Activated CD8-positive, alpha-beta T cell treated with anti-CD3 and anti-CD28 coated beads, Interleukin-2, amount 10 ng/mL, durations not matched to agents 7 days and 5 days (primary cell): ENCODE measurements at regions of chr1 and their contacts with region 1.

Region 1: DNA sequence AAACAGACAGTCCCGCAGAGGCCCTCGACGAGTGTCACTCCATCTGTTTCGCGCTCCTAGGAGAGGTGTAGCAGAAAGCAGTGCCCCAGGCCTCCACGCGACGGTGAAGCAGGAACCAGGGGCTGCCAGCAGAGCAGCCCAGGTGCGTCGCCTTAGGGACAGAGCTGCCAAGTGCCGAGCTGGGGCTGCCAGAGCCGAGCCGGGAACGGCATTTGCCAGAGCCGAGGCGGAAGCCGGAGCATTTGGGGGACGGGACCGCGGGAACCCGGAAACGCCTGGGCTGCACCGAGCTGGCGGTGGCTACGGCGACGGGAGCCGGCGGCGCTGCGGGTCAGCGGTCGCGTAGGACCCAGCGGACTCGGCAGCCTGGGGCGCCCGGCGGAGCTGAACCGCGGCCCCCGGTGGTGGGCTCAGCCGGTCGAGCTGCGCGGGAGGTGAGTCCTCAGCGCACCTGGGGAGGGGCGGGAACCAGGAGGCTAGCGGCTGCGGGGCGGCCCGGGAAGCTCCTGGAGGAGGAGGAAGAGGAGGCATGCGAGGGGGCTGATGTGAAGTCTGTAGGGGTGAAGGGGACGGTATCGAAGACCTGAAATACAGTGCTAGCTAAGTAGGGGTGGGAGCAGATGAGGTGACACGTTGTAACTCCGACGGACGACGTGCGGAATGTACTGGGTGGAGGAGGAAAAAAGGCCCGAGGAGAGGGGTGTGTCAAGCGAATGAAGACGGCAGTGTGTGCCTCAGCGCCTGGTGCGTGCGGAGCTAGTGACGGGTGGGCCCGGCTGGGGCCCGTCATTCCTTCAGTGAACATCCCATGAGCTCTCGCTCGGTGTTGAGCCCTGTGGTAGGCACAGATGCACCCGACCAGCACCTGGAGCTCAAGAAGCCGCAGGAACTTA is at the start of gene SLC35A3:
- DNase-seq: peak; percentile 81
- ATAC-seq: peak; percentile 92
- H3K4me3 Mint-ChIP-seq: peak within 1 kb of the TSS; percentile 97
- H3K27ac Mint-ChIP-seq: peak within 1 kb of the TSS; percentile 97
- H3K4me1 Mint-ChIP-seq: peaks cover 27% of the 10 kb centered on the region
- H3K27me3 Mint-ChIP-seq: no peaks in the 10 kb centered on the region
- total RNA-seq, gene SLC35A3: 18.3 to 18.8 TPM

Region 2: GRCh38 chr1:100028765-100029164 is 58.8 kb after region 1 on chr1:
- CTCF ChIA-PET with region 1: interaction called, 3 read pairs
- POLR2A ChIA-PET with region 1: interaction called, 15 read pairs
- DNase-seq: peak; percentile 48
- ATAC-seq: peak; percentile 88
- H3K4me3 Mint-ChIP-seq: no peak overlapping the region
- H3K27ac Mint-ChIP-seq: peak overlapping the region; percentile 77
- H3K4me1 Mint-ChIP-seq: peaks cover 13% of the 10 kb centered on the region
- H3K27me3 Mint-ChIP-seq: no peaks in the 10 kb centered on the region